ENCODE measurements at regions of chr9 and their contacts with region 1.

Region 1: DNA sequence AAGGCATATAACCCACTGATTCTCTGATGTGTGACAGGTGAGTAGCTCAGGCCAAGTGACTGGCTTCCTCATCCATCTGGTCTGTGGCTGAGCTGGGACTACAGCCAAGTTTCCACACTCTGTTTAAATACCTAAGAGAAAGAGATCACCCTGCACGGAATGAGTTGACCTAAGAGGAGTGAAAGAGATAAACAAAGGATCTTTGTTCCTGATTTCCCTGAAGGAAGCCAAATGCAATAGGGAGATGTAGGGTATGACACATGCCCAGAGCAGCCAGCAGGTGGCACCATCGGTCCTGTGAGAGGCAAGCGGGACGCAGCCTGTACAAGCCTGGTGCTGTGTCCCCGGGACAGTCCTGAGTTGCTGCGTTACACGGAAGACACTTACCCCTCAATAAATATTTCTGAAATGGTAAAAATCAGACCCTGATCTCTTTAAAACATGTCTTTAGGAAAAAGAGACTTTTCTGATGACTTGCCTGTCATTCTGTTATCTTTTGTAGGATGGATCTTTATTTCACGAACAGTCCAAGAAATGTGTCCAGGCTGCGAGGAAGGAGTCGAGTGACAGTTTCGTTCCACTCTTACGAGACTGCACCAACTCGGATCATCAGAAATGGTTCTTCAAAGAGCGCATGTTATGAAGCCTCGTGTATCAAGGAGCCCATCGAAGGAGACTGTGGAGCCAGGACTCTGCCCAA is 41.1 kb downstream of the GALNT12 start:
- DNase-seq: peak; percentile 70
- ATAC-seq: peak; percentile 100
- H3K4me3 ChIP-seq: peak overlapping the region in 1 of 2 experiments; percentile 33; a peak in 2 of 4 replicates
- H3K27ac ChIP-seq: no peak overlapping the region
- H3K4me1 ChIP-seq: no peaks in the 10 kb centered on the region; the same call in 1 of the 2 replicates
- H3K27me3 ChIP-seq: no peaks in the 10 kb centered on the region
- CTCF ChIP-seq: peak; percentile 88

Region 2: DNA sequence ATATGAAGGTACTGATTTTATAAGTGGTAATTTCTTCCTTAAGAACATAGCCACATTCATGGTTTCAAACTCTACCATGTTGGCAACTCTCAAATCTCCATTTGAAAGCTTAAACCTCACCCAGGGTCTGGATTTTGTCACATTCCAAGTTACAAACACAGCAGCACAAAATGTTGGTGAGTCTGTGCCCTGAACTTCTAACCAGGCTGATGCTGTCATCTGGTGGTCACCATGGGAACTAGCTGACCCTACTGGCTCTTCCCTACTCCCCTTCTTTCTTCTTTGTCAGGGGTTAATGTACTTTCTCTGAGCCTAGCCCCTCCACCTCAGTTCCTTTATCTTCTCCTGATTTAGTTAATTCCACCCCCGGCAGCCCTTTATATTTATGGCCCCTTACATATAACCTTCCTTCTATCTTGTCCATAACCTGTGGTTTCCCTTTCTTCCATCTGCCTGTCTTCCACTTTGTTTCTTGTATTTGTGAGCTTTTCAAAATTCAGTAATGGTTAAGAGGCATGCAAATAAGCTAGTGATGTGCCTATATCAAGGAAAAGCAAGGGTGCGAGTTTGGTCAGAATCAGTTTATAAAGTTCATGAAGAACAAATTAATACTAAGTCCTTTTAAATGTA is 292.2 kb after region 1 on chr9:
- CTCF ChIA-PET with region 1: no interaction called
- POLR2A ChIA-PET with region 1: no interaction called
- in situ Hi-C with region 1: no loop called
- intact Hi-C with region 1: loop called (anchors 5 kb)
- DNase-seq: peak; percentile 60
- ATAC-seq: peak; percentile 78; the same call in 1 of the 2 replicates
- H3K4me3 ChIP-seq: no peak overlapping the region
- H3K27ac ChIP-seq: no peak overlapping the region
- H3K4me1 ChIP-seq: no peaks in the 10 kb centered on the region
- H3K27me3 ChIP-seq: no peaks in the 10 kb centered on the region
- CTCF ChIP-seq: peak; percentile 86

Measured in Panc1 (cell line).